ENCODE measurements at regions of chr3 and their contacts with region 1.

Region 1: DNA sequence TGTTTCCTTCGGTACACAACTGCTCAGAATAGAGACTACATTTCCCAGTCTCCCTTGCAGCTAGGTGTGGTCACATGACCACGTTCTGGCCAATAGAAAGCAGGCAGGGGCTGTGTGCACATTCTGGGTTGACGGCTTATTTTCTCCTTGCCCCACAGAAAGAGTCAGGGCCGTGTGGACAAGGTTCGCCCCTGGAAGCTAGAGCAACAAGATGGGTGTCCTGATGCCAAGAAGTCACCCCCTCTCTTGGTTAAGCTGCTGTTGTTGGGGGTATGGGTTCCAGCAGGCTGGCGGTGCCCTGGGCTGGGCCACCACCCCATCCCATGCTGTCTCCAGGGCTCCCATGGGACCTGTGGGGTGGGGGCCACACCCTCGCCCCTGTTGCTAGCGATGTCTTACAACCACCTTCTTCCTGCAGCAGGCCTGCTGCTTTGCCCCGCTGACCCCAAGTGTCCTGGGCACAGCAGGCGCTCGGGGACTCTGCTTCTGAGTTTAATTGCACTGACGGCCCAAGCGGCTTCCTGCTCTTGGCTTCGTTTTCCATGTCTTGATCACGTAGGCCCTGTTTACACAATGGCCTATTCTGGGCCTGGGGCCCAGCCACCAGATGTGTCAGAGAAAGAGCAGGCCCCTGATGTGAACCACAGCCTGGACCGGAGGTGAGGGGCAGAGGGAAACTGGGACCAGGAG is 24.9 kb downstream of the ABTB1 start:
- DNase-seq: peak in 1 of 2 experiments; percentile 72
- H3K4me3 ChIP-seq: peak overlapping the region in 1 of 4 experiments; percentile 3; a peak in 1 of 8 replicates
- H3K27ac ChIP-seq: no peak overlapping the region
- H3K4me1 ChIP-seq: peaks cover 0 to 3% (median under 1%) of the 10 kb centered on the region in 4 experiments; a peak in 2 of 7 replicates
- H3K27me3 ChIP-seq: no peaks in the 10 kb centered on the region
- CTCF ChIP-seq: no peak
- EP300 ChIP-seq: no peak
- POLR2A ChIP-seq: no peak
- RAD21 ChIP-seq: no peak

Region 2: DNA sequence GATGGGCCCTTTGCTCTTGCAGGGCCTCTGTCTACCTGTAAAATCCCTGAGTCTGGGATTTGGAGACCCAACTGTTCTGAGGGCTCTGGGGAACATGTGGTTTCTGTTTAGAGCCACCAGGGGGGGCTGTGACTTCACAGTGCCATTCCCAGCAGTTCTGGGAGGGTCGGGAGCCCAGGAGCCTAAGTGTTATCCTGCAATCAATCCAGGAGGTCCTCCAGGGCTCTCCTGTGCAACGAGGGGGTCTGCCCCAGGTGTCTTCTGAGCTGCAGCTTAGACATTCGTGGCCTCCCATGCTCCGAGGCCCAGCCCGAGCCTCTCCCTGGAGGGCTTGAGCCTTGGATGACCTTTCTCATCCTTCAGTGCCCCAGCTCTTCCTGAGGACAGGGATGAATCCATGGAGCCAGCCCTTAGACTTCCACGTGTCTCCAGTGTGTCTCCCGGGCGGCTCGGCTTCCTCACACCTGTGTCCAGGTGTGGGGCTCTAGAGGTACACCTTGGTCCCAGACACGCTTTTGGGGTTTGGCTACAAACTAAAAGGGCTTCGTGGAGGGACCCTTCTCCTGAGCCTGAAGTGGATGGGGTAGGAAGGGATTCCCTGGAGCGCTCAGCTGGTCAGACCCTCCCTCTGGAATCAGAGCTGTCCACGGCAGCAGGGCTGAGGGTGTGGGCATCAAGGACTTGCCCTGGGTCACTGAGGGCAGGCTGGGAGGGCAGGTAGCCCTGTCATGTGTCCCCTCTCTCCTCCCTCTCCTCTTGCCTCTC is 45.3 kb before region 1 on chr3:
- CTCF ChIA-PET with region 1: interaction called, 24 read pairs
- POLR2A ChIA-PET with region 1: no interaction called
- DNase-seq: peak in 1 of 2 experiments; percentile 72
- H3K4me3 ChIP-seq: no peak overlapping the region
- H3K27ac ChIP-seq: no peak overlapping the region
- H3K4me1 ChIP-seq: no peaks in the 10 kb centered on the region
- H3K27me3 ChIP-seq: no peaks in the 10 kb centered on the region
- CTCF ChIP-seq: peak; percentile 68 to 91 (median 88)
- EP300 ChIP-seq: no peak
- POLR2A ChIP-seq: no peak
- RAD21 ChIP-seq: peak; percentile 89 to 93

Region 3: GRCh38 chr3:127710155-127710941 is 12.7 kb after region 1 on chr3:
- CTCF ChIA-PET with region 1: interaction called, 43 read pairs
- POLR2A ChIA-PET with region 1: interaction called, 4 read pairs
- DNase-seq: no peak
- H3K4me3 ChIP-seq: no peak overlapping the region
- H3K27ac ChIP-seq: no peak overlapping the region
- H3K4me1 ChIP-seq: peaks cover 0 to 11% (median 2%) of the 10 kb centered on the region in 4 experiments; a peak in 3 of 7 replicates
- H3K27me3 ChIP-seq: no peaks in the 10 kb centered on the region
- CTCF ChIP-seq: no peak
- EP300 ChIP-seq: no peak
- POLR2A ChIP-seq: no peak
- RAD21 ChIP-seq: no peak

Region 4: GRCh38 chr3:127750226-127751031 is 52.7 kb after region 1 on chr3:
- CTCF ChIA-PET with region 1: interaction called, 23 read pairs
- POLR2A ChIA-PET with region 1: no interaction called
- DNase-seq: no peak
- H3K4me3 ChIP-seq: no peak overlapping the region
- H3K27ac ChIP-seq: no peak overlapping the region
- H3K4me1 ChIP-seq: no peaks in the 10 kb centered on the region
- H3K27me3 ChIP-seq: no peaks in the 10 kb centered on the region
- CTCF ChIP-seq: no peak
- EP300 ChIP-seq: no peak
- POLR2A ChIP-seq: no peak
- RAD21 ChIP-seq: no peak

Region 5: GRCh38 chr3:127959846-127960245 is 262.1 kb after region 1 on chr3:
- CTCF ChIA-PET with region 1: interaction called, 57 read pairs
- POLR2A ChIA-PET with region 1: no interaction called
- DNase-seq: peak in 1 of 2 experiments; percentile 59
- H3K4me3 ChIP-seq: no peak overlapping the region
- H3K27ac ChIP-seq: no peak overlapping the region
- H3K4me1 ChIP-seq: no peaks in the 10 kb centered on the region; a peak in 1 of 7 replicates
- H3K27me3 ChIP-seq: no peaks in the 10 kb centered on the region
- CTCF ChIP-seq: peak; percentile 71 to 81 (median 76)
- EP300 ChIP-seq: no peak
- POLR2A ChIP-seq: no peak
- RAD21 ChIP-seq: peak; percentile 81 to 87

Region 6: GRCh38 chr3:128153156-128154041 is 455.7 kb after region 1 on chr3 and contains the start of gene EEFSEC:
- CTCF ChIA-PET with region 1: no interaction called
- POLR2A ChIA-PET with region 1: no interaction called
- DNase-seq: peak in 1 of 2 experiments; percentile 92
- H3K4me3 ChIP-seq: peak within 1 kb of the TSS; percentile 77 to 92 (median 84)
- H3K27ac ChIP-seq: no peak within 1 kb of the TSS
- H3K4me1 ChIP-seq: peaks cover 0 to 1% (median 0%) of the 10 kb centered on the region in 4 experiments; a peak in 1 of 7 replicates
- H3K27me3 ChIP-seq: no peaks in the 10 kb centered on the region; a peak in 1 of 7 replicates
- CTCF ChIP-seq: no peak
- EP300 ChIP-seq: peak in 1 of 2 experiments; percentile 55; a peak in 1 of 3 replicates
- POLR2A ChIP-seq: peak; percentile 45 to 59
- RAD21 ChIP-seq: no peak
- total RNA-seq, gene EEFSEC: 13.1 and 13.8 TPM in 2 replicates